Activated T-helper 1 cell treated with anti-CD3 and anti-CD28 coated beads, Interleukin-12 subunit alpha, Interleukin-12 subunit beta, Interleukin-2, Interleukin-4 antibody, amounts not matched to agents 30 ng/mL and 10 ng/mL and 1 ng/mL, durations not matched to agents 14 hours and 24 hours and 36 hours (primary cell): ENCODE measurements at regions of chr2 and their contacts with region 1.

Region 1: GRCh38 chr2:7672027-7672684 is 754.9 kb downstream of the RNF144A start:
- DNase-seq: peak; percentile 43
- H3K4me3 Mint-ChIP-seq: peak overlapping the region; percentile 71
- H3K27ac Mint-ChIP-seq: peak overlapping the region; percentile 93
- H3K4me1 Mint-ChIP-seq: peaks cover 79% of the 10 kb centered on the region
- H3K27me3 Mint-ChIP-seq: no peaks in the 10 kb centered on the region

Region 2: DNA sequence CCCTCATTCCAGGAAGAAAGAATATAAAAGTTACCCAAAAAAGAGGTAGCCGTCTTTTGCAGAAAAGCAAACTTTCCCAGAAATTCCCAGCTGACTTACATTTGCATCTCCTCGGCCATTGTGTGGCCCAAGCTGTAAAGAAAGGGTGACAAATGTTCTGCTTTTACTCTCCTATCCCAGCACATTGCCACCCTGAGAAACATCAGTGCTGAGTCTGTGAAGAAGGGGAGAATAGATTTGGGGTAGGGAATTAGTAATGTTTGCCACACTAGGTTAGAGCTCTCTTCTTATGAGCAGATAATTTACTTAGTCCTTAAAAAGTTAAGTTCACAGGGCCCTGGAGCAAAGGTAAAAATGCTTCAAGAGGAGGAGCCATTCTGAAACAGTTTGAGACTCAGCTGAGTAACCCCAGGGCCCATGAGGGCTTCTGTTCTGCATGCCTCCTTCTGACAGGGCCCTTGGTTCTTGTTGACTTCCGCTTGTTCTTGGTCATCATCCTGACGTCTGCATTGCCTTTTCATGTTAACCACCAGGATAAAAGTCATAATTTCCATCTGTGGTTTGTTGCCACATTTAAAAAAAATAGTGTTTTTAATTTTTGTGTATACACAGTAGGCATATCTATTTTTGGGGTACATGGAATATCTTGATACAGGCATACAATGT is 204.2 kb before region 1 on chr2:
- intact Hi-C with region 1: loop called (anchors 1 kb)
- DNase-seq: peak; percentile 44
- H3K4me3 Mint-ChIP-seq: peak overlapping the region; percentile 50
- H3K27ac Mint-ChIP-seq: peak overlapping the region; percentile 91
- H3K4me1 Mint-ChIP-seq: peaks cover 51% of the 10 kb centered on the region
- H3K27me3 Mint-ChIP-seq: no peaks in the 10 kb centered on the region

Region 3: GRCh38 chr2:7567646-7568045 is 104.5 kb before region 1 on chr2:
- intact Hi-C with region 1: loop called (anchors 1 kb)
- DNase-seq: peak; percentile 47
- H3K4me3 Mint-ChIP-seq: peak overlapping the region; percentile 25
- H3K27ac Mint-ChIP-seq: peak overlapping the region; percentile 90
- H3K4me1 Mint-ChIP-seq: peaks cover 59% of the 10 kb centered on the region
- H3K27me3 Mint-ChIP-seq: no peaks in the 10 kb centered on the region

Region 4: GRCh38 chr2:7620255-7620654 is 51.9 kb before region 1 on chr2:
- intact Hi-C with region 1: loop called (anchors 1 kb)
- DNase-seq: no peak
- H3K4me3 Mint-ChIP-seq: no peak overlapping the region
- H3K27ac Mint-ChIP-seq: no peak overlapping the region
- H3K4me1 Mint-ChIP-seq: peaks cover 26% of the 10 kb centered on the region
- H3K27me3 Mint-ChIP-seq: no peaks in the 10 kb centered on the region

Region 5: DNA sequence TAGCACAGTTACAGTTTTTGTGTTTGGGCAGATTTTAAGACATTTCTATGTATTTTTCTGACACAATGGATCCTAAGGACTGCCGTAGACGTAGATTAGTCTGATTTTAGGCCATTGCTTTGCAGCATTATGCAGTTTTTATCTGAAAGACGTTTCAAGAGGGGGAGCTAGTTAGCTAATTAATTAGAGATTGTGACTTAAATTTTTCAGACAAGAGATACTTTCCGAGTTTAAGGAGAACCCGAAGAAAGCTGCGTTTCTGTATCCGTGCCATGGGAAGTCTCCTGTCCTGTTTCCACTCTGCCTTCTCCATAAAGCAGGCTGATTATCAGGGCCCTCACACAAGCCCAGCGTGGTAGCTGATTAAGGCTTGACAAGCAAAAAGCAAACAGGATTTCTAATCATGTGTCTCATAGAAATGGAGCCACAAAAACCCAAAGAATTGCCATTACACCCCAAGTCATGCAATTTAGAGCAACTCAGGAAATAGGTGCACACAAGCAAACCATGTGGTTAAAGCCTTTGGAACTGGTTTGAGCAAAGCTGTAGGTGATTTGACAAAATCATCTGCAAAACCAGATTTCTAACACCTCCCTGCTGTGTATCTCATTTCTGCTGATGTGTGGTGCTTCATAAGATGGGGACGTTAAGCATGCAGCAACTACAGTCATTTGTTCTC is 53.2 kb after region 1 on chr2:
- intact Hi-C with region 1: loop called (anchors 1 kb)
- DNase-seq: peak; percentile 64
- H3K4me3 Mint-ChIP-seq: peak overlapping the region; percentile 87
- H3K27ac Mint-ChIP-seq: peak overlapping the region; percentile 95
- H3K4me1 Mint-ChIP-seq: peaks cover 73% of the 10 kb centered on the region
- H3K27me3 Mint-ChIP-seq: no peaks in the 10 kb centered on the region

Region 6: GRCh38 chr2:7857904-7858303 is 185.7 kb after region 1 on chr2:
- intact Hi-C with region 1: no loop called
- DNase-seq: no peak
- H3K4me3 Mint-ChIP-seq: no peak overlapping the region
- H3K27ac Mint-ChIP-seq: peak overlapping the region; percentile 54
- H3K4me1 Mint-ChIP-seq: peaks cover 28% of the 10 kb centered on the region
- H3K27me3 Mint-ChIP-seq: peaks cover 3% of the 10 kb centered on the region

Region 7: GRCh38 chr2:8303322-8303832 is 631.2 kb after region 1 on chr2:
- intact Hi-C with region 1: loop called (anchors 2 kb)
- DNase-seq: peak; percentile 77
- H3K4me3 Mint-ChIP-seq: peak overlapping the region; percentile 65
- H3K27ac Mint-ChIP-seq: peak overlapping the region; percentile 85
- H3K4me1 Mint-ChIP-seq: peaks cover 91% of the 10 kb centered on the region
- H3K27me3 Mint-ChIP-seq: peaks cover 7% of the 10 kb centered on the region